Activated CD4-positive, alpha-beta T cell treated with anti-CD3 and anti-CD28 coated beads for 36 hours (primary cell): ENCODE measurements at regions of chr9 and their contacts with region 1.

Region 1: DNA sequence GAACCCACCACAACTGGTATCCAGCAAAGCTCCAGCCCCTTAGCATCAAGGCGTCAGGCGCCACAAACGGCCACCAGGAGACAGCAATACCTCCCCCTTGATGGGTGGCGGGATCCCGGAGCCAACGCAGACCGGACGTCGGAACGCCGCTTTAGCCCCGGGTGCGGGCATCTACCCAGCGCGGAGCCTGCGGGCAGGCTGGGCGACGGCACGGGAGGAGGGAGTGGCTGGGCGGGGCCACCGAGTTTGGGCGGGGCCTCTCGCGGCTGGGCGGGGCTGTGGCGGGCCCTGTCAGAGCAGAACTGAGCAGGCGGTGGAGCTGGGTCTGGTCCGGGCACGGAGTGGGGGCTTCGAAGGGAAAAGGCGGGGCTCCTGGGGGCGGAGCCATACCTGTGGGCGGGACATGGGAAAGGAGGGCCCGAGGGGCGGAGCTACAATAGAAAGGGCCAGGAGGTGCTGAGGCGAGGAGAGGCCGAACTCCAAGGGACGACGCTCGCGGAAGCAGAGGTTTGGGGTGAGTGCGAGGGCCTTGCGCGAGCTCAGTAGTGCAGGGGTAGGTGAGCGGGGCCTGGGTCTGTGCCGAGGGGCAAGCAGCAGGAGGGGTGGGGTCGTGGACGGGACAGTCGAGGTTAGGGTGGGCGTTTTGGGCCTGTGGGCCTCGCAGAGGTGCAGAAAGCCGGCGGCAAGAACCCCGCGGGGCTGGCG is 40.2 kb upstream of the GARNL3 start:
- DNase-seq: peak; percentile 93
- ATAC-seq: peak; percentile 79
- H3K4me3 Mint-ChIP-seq: peak overlapping the region; percentile 68
- H3K27ac Mint-ChIP-seq: peak overlapping the region; percentile 16
- H3K4me1 Mint-ChIP-seq: peaks cover 24% of the 10 kb centered on the region
- H3K27me3 Mint-ChIP-seq: peaks cover 15% of the 10 kb centered on the region

Region 2: GRCh38 chr9:126733005-126733404 is 491.3 kb before region 1 on chr9:
- CTCF ChIA-PET with region 1: no interaction called
- POLR2A ChIA-PET with region 1: no interaction called
- intact Hi-C with region 1: no loop called
- DNase-seq: no peak
- ATAC-seq: no peak
- H3K4me3 Mint-ChIP-seq: no peak overlapping the region
- H3K27ac Mint-ChIP-seq: no peak overlapping the region
- H3K4me1 Mint-ChIP-seq: no peaks in the 10 kb centered on the region
- H3K27me3 Mint-ChIP-seq: no peaks in the 10 kb centered on the region

Region 3: GRCh38 chr9:127244609-127245601 is 20.6 kb after region 1 on chr9:
- CTCF ChIA-PET with region 1: interaction called, 3 read pairs
- POLR2A ChIA-PET with region 1: interaction called, 6 read pairs
- intact Hi-C with region 1: loop called (anchors 1 kb)
- DNase-seq: peak; percentile 98
- ATAC-seq: peak; percentile 100
- H3K4me3 Mint-ChIP-seq: peak overlapping the region; percentile 78
- H3K27ac Mint-ChIP-seq: peak overlapping the region; percentile 59
- H3K4me1 Mint-ChIP-seq: peaks cover 6% of the 10 kb centered on the region
- H3K27me3 Mint-ChIP-seq: peaks cover 5% of the 10 kb centered on the region

Region 4: DNA sequence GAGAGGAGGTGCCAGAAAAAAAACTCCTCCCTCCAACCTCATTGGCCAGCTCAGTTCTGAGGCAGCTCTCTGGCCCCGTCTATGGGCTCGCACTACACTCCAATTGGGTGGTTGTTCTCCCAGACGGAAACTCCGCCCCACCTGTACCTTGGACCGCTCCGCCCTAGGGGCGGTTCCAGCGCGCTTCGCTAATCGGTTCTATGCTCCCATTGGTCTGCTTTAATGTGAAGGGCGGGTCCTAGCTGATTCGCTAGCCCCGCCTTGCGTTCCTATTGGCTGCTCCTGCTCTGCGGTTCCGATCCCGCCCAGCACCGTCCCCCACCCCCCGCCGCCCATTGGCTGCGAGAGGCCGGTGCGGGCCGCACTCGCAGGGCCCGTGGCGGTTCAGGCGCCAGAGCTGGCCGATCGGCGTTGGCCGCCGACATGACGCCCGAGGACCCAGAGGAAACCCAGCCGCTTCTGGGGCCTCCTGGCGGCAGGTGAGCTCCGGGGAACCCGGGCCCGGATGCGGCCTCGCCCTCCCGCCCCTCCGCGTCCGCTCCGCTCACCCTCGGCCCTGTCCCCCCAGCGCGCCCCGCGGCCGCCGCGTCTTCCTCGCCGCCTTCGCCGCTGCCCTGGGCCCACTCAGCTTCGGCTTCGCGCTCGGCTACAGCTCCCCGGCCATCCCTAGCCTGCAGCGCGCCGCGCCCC is 172.6 kb after region 1 on chr9 and contains the start of gene SLC2A8:
- CTCF ChIA-PET with region 1: interaction called, 3 read pairs
- POLR2A ChIA-PET with region 1: no interaction called
- intact Hi-C with region 1: loop called (anchors 1 to 2 kb)
- DNase-seq: peak; percentile 93
- ATAC-seq: peak; percentile 96
- H3K4me3 Mint-ChIP-seq: peak within 1 kb of the TSS; percentile 58
- H3K27ac Mint-ChIP-seq: no peak within 1 kb of the TSS
- H3K4me1 Mint-ChIP-seq: peaks cover 12% of the 10 kb centered on the region
- H3K27me3 Mint-ChIP-seq: peaks cover 62% of the 10 kb centered on the region
- total RNA-seq, gene SLC2A8: 1.3 to 1.7 TPM

Region 5: GRCh38 chr9:127715394-127716337 is 491.3 kb after region 1 on chr9 and contains the starts of genes PTRH1 and TTC16:
- CTCF ChIA-PET with region 1: no interaction called
- POLR2A ChIA-PET with region 1: no interaction called
- intact Hi-C with region 1: loop called in 1 of 2 experiments (anchors 1 kb)
- DNase-seq: peak; percentile 99
- ATAC-seq: peak; percentile 97
- H3K4me3 Mint-ChIP-seq: peak within 1 kb of the TSS; percentile 92
- H3K27ac Mint-ChIP-seq: peak within 1 kb of the TSS; percentile 97
- H3K4me1 Mint-ChIP-seq: peaks cover 25% of the 10 kb centered on the region
- H3K27me3 Mint-ChIP-seq: no peaks in the 10 kb centered on the region
- total RNA-seq, gene PTRH1: 12.9 to 15.1 TPM
- total RNA-seq, gene TTC16: 0.16 to 0.30 TPM